Colonic mucosa (tissue), 4 donors: ENCODE measurements at regions of chr12 and their contacts with region 1.

Region 1: GRCh38 chr12:65565601-65566560 is 258.4 kb upstream of the HMGA2 start:
- DNase-seq: no peak
- H3K4me3 ChIP-seq: no peak overlapping the region
- H3K27ac ChIP-seq: no peak overlapping the region
- H3K4me1 ChIP-seq: no peaks in the 10 kb centered on the region
- H3K27me3 ChIP-seq: no peaks in the 10 kb centered on the region
- CTCF ChIP-seq: no peak

Region 2: DNA sequence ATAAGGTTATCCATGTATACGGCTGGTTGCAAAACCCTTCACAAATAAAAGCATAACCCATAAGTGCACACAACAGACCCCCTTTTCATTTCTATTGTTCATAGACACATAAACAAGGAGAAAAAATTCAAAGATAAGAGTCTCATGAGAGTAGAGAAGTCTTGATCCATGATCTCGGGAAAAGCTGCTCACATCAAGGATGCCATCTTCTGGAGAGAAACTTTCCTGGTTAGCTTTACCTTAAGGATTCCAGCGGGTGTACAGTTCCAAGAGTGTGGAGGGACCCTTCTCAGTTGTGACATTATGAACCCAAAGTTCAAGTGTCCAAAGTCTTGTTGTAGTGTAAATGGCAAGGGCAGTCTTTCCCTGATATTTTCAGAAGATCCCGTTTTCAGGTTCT is 420.2 kb after region 1 on chr12:
- intact Hi-C with region 1: loop called (anchors 10 kb)
- DNase-seq: no peak
- H3K4me3 ChIP-seq: no peak overlapping the region
- H3K27ac ChIP-seq: no peak overlapping the region
- H3K4me1 ChIP-seq: no peaks in the 10 kb centered on the region
- H3K27me3 ChIP-seq: no peaks in the 10 kb centered on the region
- CTCF ChIP-seq: no peak

Region 3: GRCh38 chr12:66087365-66087943 is 521.6 kb after region 1 on chr12:
- intact Hi-C with region 1: loop called (anchors 10 kb)
- DNase-seq: peak; percentile 66
- H3K4me3 ChIP-seq: no peak overlapping the region
- H3K27ac ChIP-seq: no peak overlapping the region
- H3K4me1 ChIP-seq: no peaks in the 10 kb centered on the region
- H3K27me3 ChIP-seq: no peaks in the 10 kb centered on the region
- CTCF ChIP-seq: peak; percentile 71